ENCODE measurements at regions of chr10 and their contacts with region 1.

Region 1: GRCh38 chr10:71727738-71728737 is 8.5 kb upstream of the C10orf105 start:
- DNase-seq: peak; percentile 78
- H3K4me3 Mint-ChIP-seq: peak overlapping the region; percentile 36
- H3K27ac Mint-ChIP-seq: peak overlapping the region; percentile 99
- H3K4me1 Mint-ChIP-seq: peaks cover 89% of the 10 kb centered on the region
- H3K27me3 Mint-ChIP-seq: no peaks in the 10 kb centered on the region

Region 2: DNA sequence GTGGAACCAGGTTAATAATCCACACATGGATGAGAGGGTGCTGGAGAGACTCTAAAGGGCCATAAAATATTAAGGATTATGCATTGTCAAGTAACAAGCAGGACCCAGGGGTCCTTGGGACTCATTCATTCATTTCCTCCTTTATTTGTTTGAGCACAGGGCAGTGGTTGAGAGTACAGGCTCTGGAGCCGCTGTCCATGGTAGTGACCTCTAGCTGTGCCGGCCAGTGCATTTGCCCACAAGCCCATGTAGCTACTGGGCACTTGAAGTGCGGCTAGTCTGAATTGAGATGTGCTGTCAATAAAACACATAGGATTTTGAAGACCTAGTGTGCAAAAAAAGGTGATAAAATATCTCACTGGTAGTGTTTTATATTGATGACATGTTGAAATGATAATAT is 146.0 kb before region 1 on chr10:
- CTCF ChIA-PET with region 1: no interaction called
- DNase-seq: no peak
- H3K4me3 Mint-ChIP-seq: no peak overlapping the region
- H3K27ac Mint-ChIP-seq: no peak overlapping the region
- H3K4me1 Mint-ChIP-seq: no peaks in the 10 kb centered on the region
- H3K27me3 Mint-ChIP-seq: peaks cover 7% of the 10 kb centered on the region

Region 3: GRCh38 chr10:71740069-71740468 is 12.0 kb after region 1 on chr10:
- CTCF ChIA-PET with region 1: interaction called, 39 read pairs
- DNase-seq: no peak
- H3K4me3 Mint-ChIP-seq: no peak overlapping the region
- H3K27ac Mint-ChIP-seq: peak overlapping the region; percentile 79
- H3K4me1 Mint-ChIP-seq: peaks cover 99% of the 10 kb centered on the region
- H3K27me3 Mint-ChIP-seq: no peaks in the 10 kb centered on the region

Region 4: DNA sequence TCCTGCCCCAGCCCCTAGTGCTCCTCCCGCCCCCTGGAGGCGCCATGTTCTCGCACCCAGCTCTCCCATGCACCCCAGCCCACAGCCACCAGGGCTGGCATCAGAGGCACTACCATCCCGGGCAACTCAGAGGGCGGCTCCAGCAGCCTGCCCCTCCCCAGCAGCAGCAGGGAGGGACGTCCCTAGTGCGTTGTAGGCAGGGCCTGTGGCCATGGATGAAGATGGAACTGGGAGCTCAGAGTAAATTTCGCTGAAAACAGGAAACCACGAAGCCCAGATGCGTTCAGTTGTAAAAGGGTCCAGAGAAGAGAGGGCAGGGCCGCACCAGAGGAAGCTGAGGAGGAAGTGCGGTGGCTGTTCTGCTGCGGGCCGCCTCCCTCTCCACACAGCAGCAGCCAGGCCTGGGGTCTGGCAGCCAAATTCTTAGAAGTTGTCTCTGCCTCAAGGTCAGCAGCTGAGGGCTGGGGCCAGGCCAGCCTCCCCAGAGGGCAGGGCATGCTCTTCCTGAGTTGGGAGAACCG is 20.7 kb after region 1 on chr10:
- CTCF ChIA-PET with region 1: interaction called, 11 read pairs
- DNase-seq: peak; percentile 93
- H3K4me3 Mint-ChIP-seq: peak overlapping the region; percentile 49
- H3K27ac Mint-ChIP-seq: peak overlapping the region; percentile 96
- H3K4me1 Mint-ChIP-seq: peaks cover 98% of the 10 kb centered on the region
- H3K27me3 Mint-ChIP-seq: no peaks in the 10 kb centered on the region

Region 5: GRCh38 chr10:71756311-71757191 is 28.5 kb after region 1 on chr10:
- CTCF ChIA-PET with region 1: interaction called, 21 read pairs
- DNase-seq: no peak
- H3K4me3 Mint-ChIP-seq: peak overlapping the region; percentile 61
- H3K27ac Mint-ChIP-seq: peak overlapping the region; percentile 97
- H3K4me1 Mint-ChIP-seq: peaks cover 94% of the 10 kb centered on the region
- H3K27me3 Mint-ChIP-seq: no peaks in the 10 kb centered on the region

Measured in activated naive CD4-positive, alpha-beta T cell treated with anti-CD3 and anti-CD28 coated beads, Interleukin-2, amount 10 ng/mL, durations not matched to agents 7 days and 5 days (primary cell).